GM12878 (cell line): ENCODE measurements at regions of chr1 and their contacts with region 1.

Region 1: GRCh38 chr1:19704247-19705113 is 39.8 kb downstream of the HTR6 start:
- DNase-seq: no peak
- ATAC-seq: peak; percentile 95
- H3K4me3 ChIP-seq: no peak overlapping the region
- H3K27ac ChIP-seq: peak overlapping the region; percentile 13; the same call in 1 of the 2 replicates
- H3K4me1 ChIP-seq: peaks cover 17% of the 10 kb centered on the region
- H3K27me3 ChIP-seq: no peaks in the 10 kb centered on the region
- CTCF ChIP-seq: peak; percentile 81 to 98 (median 91)
- EP300 ChIP-seq: no peak
- POLR2A ChIP-seq: no peak
- RAD21 ChIP-seq: peak; percentile 74

Region 2: DNA sequence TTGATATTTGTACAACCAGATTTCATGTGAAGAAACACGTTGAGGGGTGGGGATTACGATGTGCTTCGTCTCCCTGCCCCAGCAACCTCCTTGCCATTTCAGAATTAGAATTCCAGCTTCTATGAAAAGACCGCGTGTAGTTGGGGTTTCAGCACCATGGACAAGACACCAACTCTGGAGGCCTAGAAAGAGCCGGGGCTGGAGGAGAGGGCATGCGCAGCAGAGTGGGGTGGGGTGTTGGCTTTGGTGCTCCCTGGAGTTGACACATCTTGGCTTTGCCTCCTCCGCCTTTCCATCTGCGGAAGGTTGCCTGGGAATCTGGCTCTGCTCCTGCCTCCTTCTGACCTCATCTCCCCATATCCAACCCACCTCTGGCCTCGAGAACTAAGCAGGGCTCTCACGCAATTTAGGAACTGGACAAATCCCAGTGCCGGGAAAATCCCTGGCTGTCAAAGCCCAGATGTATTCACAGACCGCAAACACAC is 28.0 kb before region 1 on chr1:
- CTCF ChIA-PET with region 1: interaction called, 25 read pairs
- POLR2A ChIA-PET with region 1: no interaction called
- RAD21 ChIA-PET with region 1: no interaction called
- SMC1A ChIA-PET with region 1: interaction called, 6 read pairs
- in situ Hi-C with region 1: no loop called
- intact Hi-C with region 1: no loop called
- DNase-seq: no peak
- ATAC-seq: peak; percentile 63
- H3K4me3 ChIP-seq: no peak overlapping the region
- H3K27ac ChIP-seq: no peak overlapping the region
- H3K4me1 ChIP-seq: no peaks in the 10 kb centered on the region
- H3K27me3 ChIP-seq: peaks cover 0 to 1% of the 10 kb centered on the region in 2 experiments; a peak in 2 of 4 replicates
- CTCF ChIP-seq: no peak
- EP300 ChIP-seq: no peak
- POLR2A ChIP-seq: no peak
- RAD21 ChIP-seq: no peak

Region 3: GRCh38 chr1:19688041-19688842 is 16.2 kb before region 1 on chr1:
- CTCF ChIA-PET with region 1: interaction called, 11 read pairs
- POLR2A ChIA-PET with region 1: interaction called, 3 read pairs
- RAD21 ChIA-PET with region 1: no interaction called
- SMC1A ChIA-PET with region 1: interaction called, 5 read pairs
- in situ Hi-C with region 1: no loop called
- intact Hi-C with region 1: no loop called
- DNase-seq: no peak
- ATAC-seq: no peak
- H3K4me3 ChIP-seq: no peak overlapping the region
- H3K27ac ChIP-seq: no peak overlapping the region
- H3K4me1 ChIP-seq: no peaks in the 10 kb centered on the region
- H3K27me3 ChIP-seq: no peaks in the 10 kb centered on the region
- CTCF ChIP-seq: no peak
- EP300 ChIP-seq: no peak
- POLR2A ChIP-seq: no peak
- RAD21 ChIP-seq: no peak

Region 4: DNA sequence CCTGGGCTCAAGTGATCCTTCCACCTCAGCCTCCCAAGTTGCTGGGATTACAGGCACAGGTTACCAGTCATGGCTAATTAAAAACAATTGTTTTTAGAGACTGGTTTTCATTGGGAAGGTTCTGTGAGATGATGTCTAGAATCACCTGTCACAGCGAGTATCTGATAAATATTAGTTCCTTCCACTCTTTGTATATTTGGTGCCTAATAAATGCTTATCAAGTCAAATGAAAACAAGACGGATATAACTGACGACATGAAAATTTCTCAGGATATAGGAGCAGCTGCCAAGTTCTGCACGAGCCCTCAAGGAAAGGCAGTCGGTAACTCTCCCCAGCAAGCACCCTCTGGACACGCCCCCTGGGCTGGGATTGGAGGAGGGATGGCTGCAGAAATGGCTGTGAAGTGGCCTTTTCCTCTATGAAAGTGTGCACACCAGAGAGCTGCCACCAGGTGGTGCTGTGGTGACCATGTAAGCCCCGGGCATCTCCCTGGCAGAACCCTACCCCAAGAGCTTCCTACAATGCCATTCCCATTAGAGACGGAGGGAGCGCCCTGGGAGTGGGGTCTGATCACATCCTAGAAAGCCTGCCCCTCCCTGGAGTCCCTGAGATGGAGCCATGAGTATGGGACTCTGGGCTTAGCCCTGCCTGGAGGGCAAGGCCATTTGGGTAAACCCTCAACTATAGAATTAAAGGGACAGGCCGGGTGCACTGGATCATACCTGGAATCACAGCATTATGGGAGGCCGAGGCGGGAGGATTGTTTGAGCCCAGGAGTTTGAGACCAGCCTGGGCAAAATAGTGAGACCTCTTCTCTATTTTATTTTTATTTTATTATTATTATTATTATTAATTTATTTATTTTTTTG is 11.1 kb after region 1 on chr1:
- CTCF ChIA-PET with region 1: interaction called, 57 read pairs
- POLR2A ChIA-PET with region 1: no interaction called
- RAD21 ChIA-PET with region 1: no interaction called
- SMC1A ChIA-PET with region 1: interaction called, 7 read pairs
- in situ Hi-C with region 1: no loop called
- intact Hi-C with region 1: no loop called
- DNase-seq: peak; percentile 66
- ATAC-seq: peak; percentile 89
- H3K4me3 ChIP-seq: no peak overlapping the region
- H3K27ac ChIP-seq: no peak overlapping the region
- H3K4me1 ChIP-seq: peaks cover 22% of the 10 kb centered on the region
- H3K27me3 ChIP-seq: no peaks in the 10 kb centered on the region
- CTCF ChIP-seq: peak; percentile 85 to 91 (median 87)
- EP300 ChIP-seq: no peak
- POLR2A ChIP-seq: no peak
- RAD21 ChIP-seq: peak; percentile 63

Region 5: GRCh38 chr1:19877821-19878636 is 173.5 kb after region 1 on chr1:
- CTCF ChIA-PET with region 1: no interaction called
- POLR2A ChIA-PET with region 1: no interaction called
- RAD21 ChIA-PET with region 1: no interaction called
- SMC1A ChIA-PET with region 1: no interaction called
- in situ Hi-C with region 1: no loop called
- intact Hi-C with region 1: no loop called
- DNase-seq: no peak
- ATAC-seq: no peak
- H3K4me3 ChIP-seq: no peak overlapping the region
- H3K27ac ChIP-seq: no peak overlapping the region
- H3K4me1 ChIP-seq: no peaks in the 10 kb centered on the region
- H3K27me3 ChIP-seq: no peaks in the 10 kb centered on the region; a peak in 1 of 4 replicates
- CTCF ChIP-seq: no peak
- EP300 ChIP-seq: no peak
- POLR2A ChIP-seq: no peak
- RAD21 ChIP-seq: no peak